HCT116 (cell line): ENCODE measurements at regions of chr12 and their contacts with region 1.

Region 1: DNA sequence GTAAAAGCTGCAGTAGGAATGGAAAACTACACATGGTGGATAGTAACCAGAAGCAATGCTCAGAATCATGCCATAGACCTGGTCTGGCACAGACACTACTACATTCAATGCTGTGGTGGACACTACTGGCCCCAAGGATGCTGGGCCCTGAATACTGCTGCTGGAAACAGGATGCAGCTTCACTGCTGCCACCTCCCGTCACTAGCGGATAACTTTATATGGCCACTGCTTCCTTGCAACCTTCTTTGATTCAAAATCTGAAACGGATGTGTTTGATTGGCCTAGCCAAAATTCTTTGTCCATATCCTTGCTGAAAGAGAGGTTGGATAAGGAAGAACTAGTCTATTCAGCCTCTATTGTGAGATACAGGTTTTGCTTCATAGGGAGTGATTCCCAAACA is 30.7 kb downstream of the ADCY6 start:
- DNase-seq: no peak
- ATAC-seq: peak; percentile 57
- H3K4me3 ChIP-seq: no peak overlapping the region
- H3K27ac ChIP-seq: no peak overlapping the region
- H3K4me1 ChIP-seq: no peaks in the 10 kb centered on the region
- H3K27me3 ChIP-seq: no peaks in the 10 kb centered on the region
- CTCF ChIP-seq: peak in 1 of 3 experiments; percentile 8; a peak in 1 of 6 replicates
- POLR2A ChIP-seq: no peak
- RAD21 ChIP-seq: no peak

Region 2: GRCh38 chr12:48142818-48143674 is 615.2 kb before region 1 on chr12:
- CTCF ChIA-PET with region 1: no interaction called
- POLR2A ChIA-PET with region 1: no interaction called
- RAD21 ChIA-PET with region 1: no interaction called
- intact Hi-C with region 1: no loop called
- DNase-seq: no peak
- ATAC-seq: no peak
- H3K4me3 ChIP-seq: no peak overlapping the region
- H3K27ac ChIP-seq: no peak overlapping the region
- H3K4me1 ChIP-seq: no peaks in the 10 kb centered on the region
- H3K27me3 ChIP-seq: no peaks in the 10 kb centered on the region
- CTCF ChIP-seq: no peak
- POLR2A ChIP-seq: no peak
- RAD21 ChIP-seq: no peak

Region 3: DNA sequence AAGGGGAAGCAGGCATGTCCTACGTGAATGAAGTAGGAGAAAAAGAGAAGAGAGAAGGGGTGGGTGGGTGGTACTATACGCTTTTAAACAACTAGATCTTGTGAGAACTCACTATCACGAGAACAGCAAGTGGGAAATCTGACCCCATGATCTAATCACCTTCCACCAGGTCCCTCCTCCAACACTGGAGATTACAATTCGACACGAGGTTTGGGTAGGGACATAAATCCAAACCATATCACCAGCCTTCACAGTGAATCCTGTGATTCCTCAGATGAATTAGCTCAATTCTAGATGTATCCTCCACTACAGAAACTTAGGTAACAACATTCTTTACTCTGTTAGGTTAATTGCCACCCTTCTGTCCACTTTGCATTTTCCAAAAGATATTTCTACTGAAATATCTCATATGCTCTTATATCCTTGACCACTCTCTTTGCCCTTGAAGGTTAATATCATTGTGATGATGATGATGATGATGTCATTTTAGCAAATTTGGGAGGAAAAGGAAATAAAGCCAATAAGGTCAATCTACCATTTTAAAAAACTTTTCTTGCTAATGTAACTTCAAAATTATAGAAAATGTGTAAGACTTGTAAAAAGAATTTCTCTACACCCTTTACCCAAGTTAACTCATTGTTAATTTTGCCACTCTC is 18.5 kb before region 1 on chr12:
- CTCF ChIA-PET with region 1: interaction called, 11 read pairs
- POLR2A ChIA-PET with region 1: interaction called, 4 read pairs
- RAD21 ChIA-PET with region 1: interaction called in 1 of 2 experiments, 4 read pairs
- intact Hi-C with region 1: no loop called
- DNase-seq: no peak
- ATAC-seq: no peak
- H3K4me3 ChIP-seq: no peak overlapping the region
- H3K27ac ChIP-seq: no peak overlapping the region
- H3K4me1 ChIP-seq: no peaks in the 10 kb centered on the region
- H3K27me3 ChIP-seq: no peaks in the 10 kb centered on the region
- CTCF ChIP-seq: no peak
- POLR2A ChIP-seq: no peak
- RAD21 ChIP-seq: no peak

Region 4: GRCh38 chr12:48788854-48789796 is 30.9 kb after region 1 on chr12 and contains the start of gene ADCY6:
- CTCF ChIA-PET with region 1: interaction called, 85 read pairs
- POLR2A ChIA-PET with region 1: interaction called, 12 read pairs
- RAD21 ChIA-PET with region 1: interaction called in 1 of 2 experiments, 10 read pairs
- intact Hi-C with region 1: no loop called
- DNase-seq: peak; percentile 29
- ATAC-seq: peak; percentile 81
- H3K4me3 ChIP-seq: peak within 1 kb of the TSS; percentile 80 to 90
- H3K27ac ChIP-seq: peak within 1 kb of the TSS; percentile 72
- H3K4me1 ChIP-seq: peaks cover 14 to 25% of the 10 kb centered on the region in 2 experiments
- H3K27me3 ChIP-seq: no peaks in the 10 kb centered on the region
- CTCF ChIP-seq: no peak
- POLR2A ChIP-seq: no peak
- RAD21 ChIP-seq: no peak
- total RNA-seq, gene ADCY6: 24.9 TPM

Region 5: GRCh38 chr12:48814262-48815125 is 56.3 kb after region 1 on chr12:
- CTCF ChIA-PET with region 1: interaction called, 17 read pairs
- POLR2A ChIA-PET with region 1: no interaction called
- RAD21 ChIA-PET with region 1: interaction called in 1 of 2 experiments, 3 read pairs
- intact Hi-C with region 1: no loop called
- DNase-seq: peak; percentile 39
- ATAC-seq: peak; percentile 75
- H3K4me3 ChIP-seq: peak overlapping the region; percentile 60 to 92
- H3K27ac ChIP-seq: peak overlapping the region; percentile 84
- H3K4me1 ChIP-seq: peaks cover 27 to 57% of the 10 kb centered on the region in 2 experiments
- H3K27me3 ChIP-seq: no peaks in the 10 kb centered on the region
- CTCF ChIP-seq: peak in 2 of 3 experiments; percentile 97 to 100; a peak in 4 of 6 replicates
- POLR2A ChIP-seq: no peak
- RAD21 ChIP-seq: no peak